ENCODE measurements at regions of chr2 and their contacts with region 1.

Region 1: DNA sequence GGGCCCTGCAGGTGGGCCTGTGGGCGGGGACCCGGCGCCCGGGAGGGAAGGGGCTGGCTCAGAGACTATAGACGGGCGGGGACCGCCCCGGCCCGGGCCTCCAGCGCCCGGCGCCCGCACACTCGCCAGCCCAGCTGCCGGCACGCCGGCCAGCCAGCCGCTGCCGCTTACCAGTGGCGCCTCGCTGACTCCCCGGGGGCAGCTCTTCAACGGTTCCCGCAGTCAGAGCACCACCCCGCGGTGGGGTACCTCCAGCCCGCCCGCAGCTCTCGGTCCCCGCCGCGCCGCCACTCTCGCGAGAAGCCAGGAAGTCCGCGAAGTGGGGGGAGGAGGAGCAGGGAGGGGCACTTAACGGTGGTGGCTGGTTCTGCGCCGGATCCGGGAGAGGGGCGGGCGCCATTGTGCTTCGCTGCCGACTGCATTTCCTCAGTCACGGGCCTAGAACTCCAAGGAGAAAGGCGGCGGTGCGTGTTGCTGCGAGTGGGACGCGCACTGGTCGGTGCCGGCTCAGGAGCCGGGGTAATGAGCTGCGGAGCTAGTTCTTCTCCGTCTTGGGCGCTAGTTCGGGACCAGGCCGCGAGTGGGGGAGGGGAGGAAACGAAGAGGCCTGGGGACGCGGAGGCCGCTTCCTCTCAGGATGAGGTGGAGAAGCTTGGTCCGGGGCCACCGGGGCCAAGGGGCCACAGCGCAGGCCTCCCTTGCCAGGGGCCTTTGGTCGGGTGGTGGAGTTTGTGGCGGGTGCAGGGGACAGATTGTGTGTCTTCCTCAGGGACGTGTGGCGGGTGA is at the start of gene MARCHF7:
- DNase-seq: peak; percentile 96
- H3K4me3 ChIP-seq: peak within 1 kb of the TSS; percentile 80 to 96 (median 94)
- H3K27ac ChIP-seq: peak within 1 kb of the TSS; percentile 86
- H3K4me1 ChIP-seq: peaks cover 28% of the 10 kb centered on the region
- H3K27me3 ChIP-seq: no peaks in the 10 kb centered on the region
- CTCF ChIP-seq: peak; percentile 69 to 77
- POLR2A ChIP-seq: peak; percentile 94
- total RNA-seq, gene MARCHF7: 82.0 and 93.9 TPM in 2 replicates

Region 2: GRCh38 chr2:159140070-159140769 is 572.1 kb before region 1 on chr2:
- CTCF ChIA-PET with region 1: no interaction called
- POLR2A ChIA-PET with region 1: interaction called, 5 read pairs
- dilution Hi-C with region 1: no loop called
- intact Hi-C with region 1: loop called (anchors 5 kb)
- DNase-seq: peak; percentile 87
- H3K4me3 ChIP-seq: no peak overlapping the region
- H3K27ac ChIP-seq: peak overlapping the region; percentile 93
- H3K4me1 ChIP-seq: peaks cover 60% of the 10 kb centered on the region
- H3K27me3 ChIP-seq: no peaks in the 10 kb centered on the region
- CTCF ChIP-seq: no peak
- POLR2A ChIP-seq: peak; percentile 34

Region 3: DNA sequence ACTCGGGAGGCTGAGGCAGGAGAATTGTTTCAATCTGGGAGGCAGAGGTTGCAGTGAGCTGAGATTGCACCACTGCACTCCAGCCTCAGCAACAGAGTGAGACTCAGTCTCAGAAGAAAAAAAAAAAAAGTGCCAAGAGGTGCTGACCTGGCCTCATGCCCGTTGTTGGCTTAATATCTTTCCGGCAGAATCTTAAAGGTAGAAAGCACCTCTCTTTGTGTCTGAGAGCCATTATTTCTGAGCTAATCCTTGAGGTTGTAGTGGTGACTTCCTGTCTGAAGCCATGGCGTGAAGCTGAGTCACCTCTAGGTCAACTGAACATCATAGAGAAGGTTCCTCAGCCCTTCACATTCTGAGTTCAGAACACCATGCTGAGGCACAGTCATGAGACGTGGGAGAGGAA is 486.3 kb before region 1 on chr2:
- CTCF ChIA-PET with region 1: no interaction called
- POLR2A ChIA-PET with region 1: interaction called, 4 read pairs
- dilution Hi-C with region 1: no loop called
- intact Hi-C with region 1: loop called (anchors 1 kb)
- DNase-seq: peak; percentile 57
- H3K4me3 ChIP-seq: no peak overlapping the region
- H3K27ac ChIP-seq: peak overlapping the region; percentile 78
- H3K4me1 ChIP-seq: peaks cover 27% of the 10 kb centered on the region
- H3K27me3 ChIP-seq: no peaks in the 10 kb centered on the region
- CTCF ChIP-seq: no peak
- POLR2A ChIP-seq: no peak

Region 4: DNA sequence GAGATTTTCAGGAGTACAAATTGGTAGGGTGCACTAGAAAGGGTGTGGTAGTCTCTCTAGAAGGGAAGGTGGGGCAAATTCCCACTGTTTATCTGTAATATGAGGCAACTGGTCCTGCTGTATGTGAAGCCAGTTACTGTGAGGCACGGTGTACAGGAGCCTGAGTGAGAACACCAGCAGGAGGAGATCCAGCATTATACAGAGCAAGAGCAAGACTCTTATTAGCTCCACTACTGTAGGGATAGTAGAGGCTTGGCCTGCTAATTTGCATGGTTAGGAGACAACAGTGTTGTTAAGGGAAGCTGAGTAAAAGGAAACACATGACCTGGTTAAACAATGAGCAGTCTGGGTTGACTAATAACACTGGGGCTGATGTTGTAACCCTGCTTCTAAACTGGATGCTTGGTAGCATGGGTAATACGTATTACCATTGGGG is 349.5 kb before region 1 on chr2:
- CTCF ChIA-PET with region 1: interaction called, 7 read pairs
- POLR2A ChIA-PET with region 1: interaction called, 7 read pairs
- dilution Hi-C with region 1: no loop called
- intact Hi-C with region 1: loop called (anchors 1 kb)
- DNase-seq: peak; percentile 98
- H3K4me3 ChIP-seq: no peak overlapping the region
- H3K27ac ChIP-seq: peak overlapping the region; percentile 91
- H3K4me1 ChIP-seq: peaks cover 15% of the 10 kb centered on the region
- H3K27me3 ChIP-seq: no peaks in the 10 kb centered on the region
- CTCF ChIP-seq: peak; percentile 4 to 26
- POLR2A ChIP-seq: no peak

Region 5: GRCh38 chr2:159549234-159549633 is 163.1 kb before region 1 on chr2:
- CTCF ChIA-PET with region 1: no interaction called
- POLR2A ChIA-PET with region 1: no interaction called
- dilution Hi-C with region 1: no loop called
- intact Hi-C with region 1: loop called (anchors 5 kb)
- DNase-seq: peak; percentile 68
- H3K4me3 ChIP-seq: no peak overlapping the region
- H3K27ac ChIP-seq: peak overlapping the region; percentile 73
- H3K4me1 ChIP-seq: peaks cover 17% of the 10 kb centered on the region
- H3K27me3 ChIP-seq: no peaks in the 10 kb centered on the region
- CTCF ChIP-seq: no peak
- POLR2A ChIP-seq: no peak

Region 6: GRCh38 chr2:159573846-159574606 is 138.3 kb before region 1 on chr2:
- CTCF ChIA-PET with region 1: no interaction called
- POLR2A ChIA-PET with region 1: no interaction called
- dilution Hi-C with region 1: no loop called
- intact Hi-C with region 1: no loop called
- DNase-seq: no peak
- H3K4me3 ChIP-seq: no peak overlapping the region
- H3K27ac ChIP-seq: no peak overlapping the region
- H3K4me1 ChIP-seq: no peaks in the 10 kb centered on the region
- H3K27me3 ChIP-seq: no peaks in the 10 kb centered on the region
- CTCF ChIP-seq: no peak
- POLR2A ChIP-seq: no peak

Region 7: GRCh38 chr2:159722580-159722979 is 10.2 kb after region 1 on chr2:
- CTCF ChIA-PET with region 1: interaction called, 6 read pairs
- POLR2A ChIA-PET with region 1: interaction called, 6 read pairs
- dilution Hi-C with region 1: no loop called
- intact Hi-C with region 1: loop called (anchors 1 kb)
- DNase-seq: no peak
- H3K4me3 ChIP-seq: no peak overlapping the region
- H3K27ac ChIP-seq: no peak overlapping the region
- H3K4me1 ChIP-seq: peaks cover 22% of the 10 kb centered on the region
- H3K27me3 ChIP-seq: no peaks in the 10 kb centered on the region
- CTCF ChIP-seq: no peak
- POLR2A ChIP-seq: no peak

Region 8: GRCh38 chr2:159968279-159968900 is 256.1 kb after region 1 on chr2:
- CTCF ChIA-PET with region 1: interaction called, 5 read pairs
- POLR2A ChIA-PET with region 1: no interaction called
- dilution Hi-C with region 1: no loop called
- intact Hi-C with region 1: loop called (anchors 10 kb)
- DNase-seq: peak; percentile 76
- H3K4me3 ChIP-seq: no peak overlapping the region
- H3K27ac ChIP-seq: no peak overlapping the region
- H3K4me1 ChIP-seq: peaks cover 2% of the 10 kb centered on the region
- H3K27me3 ChIP-seq: no peaks in the 10 kb centered on the region
- CTCF ChIP-seq: peak; percentile 55 to 57
- POLR2A ChIP-seq: no peak